Dendritic cell treated with granulocyte-macrophage colony-stimulating factor and Interleukin-4, amounts not matched to agents 40 ng/mL and 50 ng/mL, for 4 days (primary cell): ENCODE measurements at regions of chr6 and their contacts with region 1.

Region 1: DNA sequence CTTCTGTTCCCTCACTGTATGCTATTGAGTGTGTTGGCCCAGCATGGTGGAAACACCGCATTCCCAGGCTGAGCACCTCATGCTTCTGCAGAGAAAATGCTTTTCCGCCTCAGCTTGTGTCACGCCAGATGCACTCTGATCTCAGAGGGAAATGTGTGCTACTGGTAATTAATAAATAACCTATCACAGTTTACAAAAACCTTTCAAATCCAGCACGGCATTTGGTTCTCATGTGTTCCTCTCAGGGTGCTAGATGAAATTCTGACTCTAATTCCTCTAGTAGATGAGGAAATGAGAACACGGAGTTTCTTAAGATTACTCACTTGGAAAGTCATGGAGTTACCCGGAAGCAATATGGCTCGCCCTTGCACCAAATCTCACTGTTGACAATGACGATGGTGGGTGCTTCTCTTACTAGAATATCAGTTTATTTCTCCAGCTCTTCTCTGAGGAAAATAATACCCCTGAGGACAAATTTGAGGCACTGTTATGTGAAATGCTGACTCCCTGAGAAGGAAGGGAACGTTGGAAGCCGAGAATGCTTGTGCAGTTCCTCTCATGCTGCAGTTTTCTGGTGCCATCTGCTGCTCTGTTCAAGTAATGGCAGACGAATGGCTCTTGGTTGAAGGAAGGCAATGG is 116.6 kb downstream of the RNF144B start:
- H3K4me3 Mint-ChIP-seq: peak overlapping the region; percentile 56
- H3K27ac Mint-ChIP-seq: peak overlapping the region; percentile 97
- H3K4me1 Mint-ChIP-seq: peaks cover 64% of the 10 kb centered on the region
- H3K27me3 Mint-ChIP-seq: no peaks in the 10 kb centered on the region

Region 2: GRCh38 chr6:17656092-17656491 is 847.6 kb before region 1 on chr6:
- intact Hi-C with region 1: no loop called
- H3K4me3 Mint-ChIP-seq: no peak overlapping the region
- H3K27ac Mint-ChIP-seq: no peak overlapping the region
- H3K4me1 Mint-ChIP-seq: peaks cover 9% of the 10 kb centered on the region
- H3K27me3 Mint-ChIP-seq: no peaks in the 10 kb centered on the region

Region 3: GRCh38 chr6:18264219-18264922 is 239.3 kb before region 1 on chr6 and contains the start of gene DEK:
- intact Hi-C with region 1: loop called (anchors 5 kb)
- H3K4me3 Mint-ChIP-seq: peak within 1 kb of the TSS; percentile 98
- H3K27ac Mint-ChIP-seq: peak within 1 kb of the TSS; percentile 96
- H3K4me1 Mint-ChIP-seq: peaks cover 40% of the 10 kb centered on the region
- H3K27me3 Mint-ChIP-seq: no peaks in the 10 kb centered on the region

Region 4: DNA sequence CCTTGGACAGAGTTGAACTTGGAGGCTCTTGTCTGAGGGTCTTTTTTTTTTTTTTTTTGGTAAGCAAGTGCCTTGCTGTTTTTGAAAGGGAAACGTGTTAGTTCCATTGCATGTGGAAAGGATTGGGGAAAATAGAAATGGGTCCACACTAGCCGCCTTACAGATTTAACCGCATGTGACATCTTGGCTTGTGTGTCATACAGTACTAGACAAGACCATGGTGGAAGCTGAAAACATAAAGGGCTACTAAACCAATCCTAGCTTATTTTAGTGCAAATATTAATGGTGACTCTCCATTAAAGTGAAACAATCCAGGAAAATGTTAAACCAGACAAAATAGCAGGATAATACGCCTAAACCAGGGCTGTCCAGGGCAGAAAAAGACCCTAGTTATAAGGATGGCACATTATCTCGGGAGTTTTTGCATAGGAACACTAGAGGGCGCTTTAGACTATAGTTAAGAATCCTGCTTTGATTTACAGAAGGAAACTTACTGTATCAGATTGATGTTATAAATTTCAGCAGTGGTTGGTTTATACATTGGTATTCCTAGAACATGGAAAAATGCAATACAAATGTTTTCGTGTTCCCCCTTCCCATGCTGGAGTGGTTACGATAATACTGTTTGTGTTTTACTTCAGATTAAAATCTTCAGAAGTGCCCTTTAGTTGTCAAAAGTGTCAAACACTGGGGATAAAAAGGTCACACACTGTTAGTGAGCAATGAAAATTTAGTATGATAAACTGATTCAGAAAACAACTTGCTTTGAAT is 179.6 kb before region 1 on chr6:
- intact Hi-C with region 1: loop called (anchors 1 kb)
- H3K4me3 Mint-ChIP-seq: no peak overlapping the region
- H3K27ac Mint-ChIP-seq: peak overlapping the region; percentile 63
- H3K4me1 Mint-ChIP-seq: peaks cover 51% of the 10 kb centered on the region
- H3K27me3 Mint-ChIP-seq: no peaks in the 10 kb centered on the region

Region 5: GRCh38 chr6:18400831-18401446 is 102.8 kb before region 1 on chr6:
- intact Hi-C with region 1: loop called (anchors 5 kb)
- H3K4me3 Mint-ChIP-seq: peak overlapping the region; percentile 34
- H3K27ac Mint-ChIP-seq: peak overlapping the region; percentile 94
- H3K4me1 Mint-ChIP-seq: peaks cover 80% of the 10 kb centered on the region
- H3K27me3 Mint-ChIP-seq: no peaks in the 10 kb centered on the region